ENCODE measurements at regions of chr6 and their contacts with region 1.

Region 1: GRCh38 chr6:36765594-36766398 is 68.2 kb downstream of the RAB44 start:
- DNase-seq: peak; percentile 92
- ATAC-seq: peak; percentile 92
- H3K4me3 Mint-ChIP-seq: no peak overlapping the region
- H3K27ac Mint-ChIP-seq: no peak overlapping the region
- H3K4me1 Mint-ChIP-seq: peaks cover 26% of the 10 kb centered on the region
- H3K27me3 Mint-ChIP-seq: no peaks in the 10 kb centered on the region

Region 2: DNA sequence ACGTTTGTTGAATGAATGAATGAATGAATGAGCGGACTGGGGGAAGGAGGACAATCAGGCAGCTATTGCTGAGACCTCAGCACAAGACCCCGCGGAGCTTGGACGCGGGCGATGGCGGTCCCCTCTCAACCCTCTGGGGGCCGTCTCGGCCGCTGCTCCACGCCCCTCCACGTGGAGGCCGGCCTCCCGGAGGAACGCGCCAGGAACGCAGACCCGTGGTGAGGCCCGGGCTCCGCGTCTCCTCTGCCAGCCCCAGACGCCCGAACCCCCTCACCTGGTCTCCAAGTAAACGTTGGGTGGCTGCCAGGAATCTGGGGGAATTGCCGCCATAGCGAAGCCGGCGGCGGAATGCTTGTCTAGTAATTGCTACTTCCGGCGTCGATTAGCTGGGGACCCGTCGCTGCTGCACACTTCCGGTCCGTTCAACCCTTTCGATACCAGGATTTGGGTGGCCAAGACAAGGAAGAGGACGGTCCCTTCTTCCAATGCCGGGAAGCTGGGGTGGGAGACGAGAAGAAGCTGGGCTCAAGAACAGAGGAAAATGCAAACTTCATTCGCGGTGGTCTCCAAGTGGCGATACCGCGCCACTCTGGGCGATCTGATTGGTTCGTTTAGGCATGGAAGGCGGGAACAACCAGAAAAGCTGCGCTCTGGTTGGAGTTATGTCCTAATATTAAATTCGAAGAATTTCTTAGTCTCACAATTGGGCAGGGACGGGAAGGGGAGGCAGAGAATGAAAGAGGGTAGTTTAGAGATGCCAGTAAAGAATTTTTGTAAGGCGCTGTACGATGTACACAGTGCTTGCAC is 108.8 kb after region 1 on chr6 and contains the start of gene PPIL1:
- CTCF ChIA-PET with region 1: interaction called, 30 read pairs
- POLR2A ChIA-PET with region 1: no interaction called
- intact Hi-C with region 1: no loop called
- DNase-seq: peak; percentile 90
- ATAC-seq: peak; percentile 80
- H3K4me3 Mint-ChIP-seq: peak within 1 kb of the TSS; percentile 98
- H3K27ac Mint-ChIP-seq: peak within 1 kb of the TSS; percentile 99
- H3K4me1 Mint-ChIP-seq: peaks cover 45% of the 10 kb centered on the region
- H3K27me3 Mint-ChIP-seq: peaks cover 7% of the 10 kb centered on the region
- total RNA-seq, gene PPIL1: 45.9 to 46.0 TPM

Region 3: GRCh38 chr6:37137201-37138090 is 371.6 kb after region 1 on chr6:
- CTCF ChIA-PET with region 1: no interaction called
- POLR2A ChIA-PET with region 1: no interaction called
- intact Hi-C with region 1: no loop called
- DNase-seq: peak; percentile 71
- ATAC-seq: peak; percentile 82
- H3K4me3 Mint-ChIP-seq: peak overlapping the region; percentile 43
- H3K27ac Mint-ChIP-seq: peak overlapping the region; percentile 94
- H3K4me1 Mint-ChIP-seq: peaks cover 46% of the 10 kb centered on the region
- H3K27me3 Mint-ChIP-seq: no peaks in the 10 kb centered on the region